Motor neuron (in vitro differentiated cells): ENCODE measurements at regions of chr11 and their contacts with region 1.

Region 1: DNA sequence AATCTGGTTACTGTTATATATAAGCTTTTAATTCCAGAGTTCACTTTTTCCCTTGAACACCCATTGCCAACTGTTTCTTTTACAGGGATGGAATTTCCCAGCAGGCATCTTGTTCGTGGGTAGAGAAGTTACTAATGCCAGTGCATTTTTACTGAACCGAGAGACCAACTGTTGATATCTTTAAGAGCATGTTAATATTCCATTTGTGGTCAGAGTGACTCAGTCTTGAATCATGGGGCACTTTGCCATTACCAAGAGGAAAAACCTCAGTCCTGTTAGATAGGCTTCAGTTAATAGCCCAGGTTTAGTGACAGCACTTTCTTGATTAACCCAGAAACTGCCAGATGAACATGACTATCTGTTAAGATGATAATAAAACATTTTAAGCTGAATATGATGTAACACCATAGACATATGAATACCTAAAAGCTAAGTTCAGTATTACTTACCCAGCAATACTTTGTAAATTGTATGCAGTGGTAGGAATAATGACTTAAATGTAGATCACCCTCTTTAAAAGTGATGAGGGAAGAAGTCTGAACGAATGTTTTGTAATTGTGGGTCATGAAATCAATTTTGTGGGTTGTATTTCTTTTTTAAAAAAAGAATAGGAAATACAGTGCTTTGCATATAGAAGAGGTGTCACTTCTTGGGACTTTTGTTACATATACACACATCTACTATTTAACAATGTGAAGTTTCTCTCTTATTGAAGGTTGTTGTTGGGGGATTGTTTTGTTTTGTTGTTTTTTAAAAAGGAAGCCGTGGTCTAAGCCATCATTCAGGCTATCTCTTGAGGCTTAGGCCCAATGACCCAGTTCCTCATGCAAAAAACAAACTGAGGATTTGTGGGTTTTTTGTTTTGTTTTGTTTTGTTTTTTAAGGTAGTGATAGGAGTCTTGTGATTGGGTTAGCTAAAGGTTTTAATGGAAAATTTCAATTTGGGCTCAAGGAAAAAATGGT is 79.2 kb upstream of the GRIK4 start:
- ATAC-seq: peak in 6 of 8 experiments; percentile 68 to 99 (median 86)
- H3K4me3 ChIP-seq: no peak overlapping the region
- H3K27ac ChIP-seq: no peak overlapping the region
- H3K4me1 ChIP-seq: no peaks in the 10 kb centered on the region

Region 2: DNA sequence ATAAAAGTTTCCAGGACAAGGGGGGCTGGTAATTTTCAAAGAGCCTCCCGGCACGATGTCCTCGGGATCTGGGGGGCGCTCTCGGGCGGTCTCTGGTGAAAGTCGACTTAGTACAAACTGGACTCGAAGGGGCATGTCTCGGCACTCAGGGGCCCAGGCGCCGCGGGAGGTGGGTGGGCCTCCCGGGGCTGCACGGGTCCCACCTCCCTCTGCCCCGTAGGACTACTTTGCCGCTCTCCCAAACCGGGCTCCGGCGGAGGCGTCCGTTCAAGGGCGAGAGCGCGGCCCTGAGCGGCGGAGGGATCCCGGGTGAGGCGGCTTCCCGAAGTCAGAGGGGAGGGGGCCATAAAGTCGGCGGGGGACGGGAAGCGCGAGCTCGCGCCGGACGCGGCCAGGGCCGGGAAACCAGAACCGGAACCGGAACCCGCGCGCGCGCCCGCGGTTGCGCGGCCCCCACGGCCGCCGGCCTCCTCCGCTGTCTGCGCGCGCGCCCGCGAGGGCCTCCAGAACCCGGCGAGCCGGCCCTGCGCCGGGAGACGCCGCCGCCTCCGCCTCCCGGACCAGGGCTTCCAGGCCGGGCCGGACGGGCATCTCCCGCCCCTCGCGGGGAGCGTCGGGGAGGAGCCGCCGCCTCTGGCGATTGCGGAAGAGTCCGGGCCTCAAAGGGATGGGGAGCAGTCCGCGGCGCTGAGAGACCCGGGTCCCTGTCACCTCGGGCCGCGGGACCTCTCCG is 96.3 kb before region 1 on chr11 and contains the start of gene ARHGEF12:
- in situ Hi-C with region 1: loop called in 2 of 9 experiments (anchors 10 to 25 kb)
- ATAC-seq: peak; percentile 64 to 84 (median 77)
- H3K4me3 ChIP-seq: peak within 1 kb of the TSS; percentile 66 to 85 (median 74)
- H3K27ac ChIP-seq: peak within 1 kb of the TSS; percentile 74 to 83
- H3K4me1 ChIP-seq: peaks cover 12 to 22% of the 10 kb centered on the region in 2 donors
- total RNA-seq, gene ARHGEF12: 37.5 to 108 (median 48.2) TPM